ENCODE measurements at regions of chr19 and their contacts with region 1.

Region 1: DNA sequence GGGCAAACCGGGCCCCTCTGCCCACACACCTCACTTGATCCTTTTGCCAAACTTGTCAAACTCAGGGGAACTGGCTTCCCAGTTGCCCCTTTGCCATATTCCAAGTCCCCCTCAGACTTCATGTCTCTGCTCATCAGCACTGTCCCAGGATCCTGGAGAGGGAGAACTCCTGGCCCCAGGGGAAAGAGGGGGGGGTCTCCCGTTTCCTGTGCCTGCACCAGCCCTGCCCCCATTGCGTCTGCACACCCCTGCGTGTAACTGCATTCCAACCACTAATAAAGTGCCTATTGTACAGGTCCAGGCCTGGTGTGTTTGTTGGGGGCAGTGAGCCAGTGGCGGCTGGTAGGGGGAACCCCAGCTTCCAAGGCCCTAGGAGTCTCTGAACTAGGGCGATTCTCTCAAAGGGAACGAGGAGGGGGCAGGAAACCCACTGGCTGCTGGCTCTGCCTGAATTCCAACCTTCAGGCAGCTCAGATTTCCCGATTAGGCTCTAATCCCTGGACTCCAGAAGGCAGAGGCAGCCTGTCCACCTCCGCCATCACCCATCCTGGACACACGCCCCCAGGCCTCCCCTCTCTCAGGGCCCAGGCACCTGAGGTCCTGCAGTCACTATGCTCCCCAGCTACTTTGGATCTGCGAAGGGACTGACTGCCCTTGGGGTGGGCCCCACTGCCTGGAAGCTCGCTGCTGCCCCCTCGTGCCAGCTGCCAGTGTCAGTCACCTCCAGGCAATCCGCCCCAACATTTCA is 9.7 kb upstream of the ILF3 start:
- DNase-seq: peak; percentile 85 to 89
- H3K4me3 ChIP-seq: no peak overlapping the region
- H3K4me3 Mint-ChIP-seq: no peak overlapping the region
- H3K27ac Mint-ChIP-seq: peak overlapping the region; percentile 70
- H3K4me1 ChIP-seq: peaks cover 6% of the 10 kb centered on the region
- H3K4me1 Mint-ChIP-seq: peaks cover 10% of the 10 kb centered on the region
- H3K27me3 ChIP-seq: no peaks in the 10 kb centered on the region
- H3K27me3 Mint-ChIP-seq: no peaks in the 10 kb centered on the region
- CTCF ChIP-seq: peak; percentile 86 to 92

Region 2: GRCh38 chr19:10580979-10581631 is 63.3 kb before region 1 on chr19:
- CTCF ChIA-PET with region 1: interaction called, 86 read pairs
- POLR2A ChIA-PET with region 1: interaction called, 4 read pairs
- intact Hi-C with region 1: loop called (anchors 1 kb)
- DNase-seq: peak; percentile 81 to 85
- H3K4me3 ChIP-seq: no peak overlapping the region
- H3K4me3 Mint-ChIP-seq: no peak overlapping the region
- H3K27ac Mint-ChIP-seq: peak overlapping the region; percentile 57
- H3K4me1 ChIP-seq: peaks cover 6% of the 10 kb centered on the region
- H3K4me1 Mint-ChIP-seq: peaks cover 6% of the 10 kb centered on the region
- H3K27me3 ChIP-seq: no peaks in the 10 kb centered on the region
- H3K27me3 Mint-ChIP-seq: no peaks in the 10 kb centered on the region
- CTCF ChIP-seq: peak; percentile 95 to 98

Region 3: GRCh38 chr19:10602330-10603083 is 41.9 kb before region 1 on chr19:
- CTCF ChIA-PET with region 1: interaction called, 14 read pairs
- POLR2A ChIA-PET with region 1: no interaction called
- intact Hi-C with region 1: no loop called
- DNase-seq: peak; percentile 71 to 82
- H3K4me3 ChIP-seq: peak overlapping the region; percentile 72
- H3K4me3 Mint-ChIP-seq: peak overlapping the region; percentile 67
- H3K27ac Mint-ChIP-seq: no peak overlapping the region
- H3K4me1 ChIP-seq: no peaks in the 10 kb centered on the region
- H3K4me1 Mint-ChIP-seq: peaks cover 11% of the 10 kb centered on the region
- H3K27me3 ChIP-seq: no peaks in the 10 kb centered on the region
- H3K27me3 Mint-ChIP-seq: peaks cover 3% of the 10 kb centered on the region
- CTCF ChIP-seq: no peak

Region 4: GRCh38 chr19:10625003-10625776 is 19.2 kb before region 1 on chr19 and contains the start of gene SLC44A2:
- CTCF ChIA-PET with region 1: interaction called, 5 read pairs
- POLR2A ChIA-PET with region 1: interaction called, 5 read pairs
- intact Hi-C with region 1: loop called (anchors 2 kb)
- DNase-seq: peak; percentile 88 to 93
- H3K4me3 ChIP-seq: peak within 1 kb of the TSS; percentile 85
- H3K4me3 Mint-ChIP-seq: peak within 1 kb of the TSS; percentile 91
- H3K27ac Mint-ChIP-seq: peak within 1 kb of the TSS; percentile 89
- H3K4me1 ChIP-seq: peaks cover 17% of the 10 kb centered on the region
- H3K4me1 Mint-ChIP-seq: no peaks in the 10 kb centered on the region
- H3K27me3 ChIP-seq: no peaks in the 10 kb centered on the region
- H3K27me3 Mint-ChIP-seq: no peaks in the 10 kb centered on the region
- CTCF ChIP-seq: no peak
- total RNA-seq, gene SLC44A2: 119 and 120 TPM in 2 replicates

Region 5: DNA sequence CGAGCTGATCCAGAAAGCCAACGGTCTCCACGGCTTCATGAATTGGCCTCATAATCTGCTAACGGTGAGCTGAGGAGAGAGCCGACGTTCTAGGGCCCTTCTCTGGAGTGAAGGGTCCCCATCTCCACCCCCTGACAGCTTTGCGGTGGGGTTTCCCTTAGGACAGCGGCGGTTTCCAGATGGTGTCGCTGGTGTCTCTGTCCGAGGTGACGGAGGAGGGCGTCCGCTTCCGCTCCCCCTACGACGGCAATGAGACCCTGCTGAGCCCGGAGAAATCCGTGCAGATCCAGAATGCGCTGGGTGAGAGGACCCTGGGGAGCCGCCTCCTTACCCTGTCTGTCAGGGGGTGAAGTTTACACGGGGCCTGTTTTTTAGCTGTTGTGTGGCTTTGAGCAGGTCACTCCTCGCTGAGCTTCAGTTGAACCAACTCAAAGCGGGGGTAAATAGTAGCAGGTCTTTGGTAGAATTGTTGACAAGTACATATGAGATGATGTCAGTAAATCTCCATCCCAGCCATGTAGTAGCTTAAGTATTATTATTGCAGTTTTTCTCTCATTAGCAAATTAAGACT is 57.6 kb after region 1 on chr19:
- CTCF ChIA-PET with region 1: interaction called, 13 read pairs
- POLR2A ChIA-PET with region 1: no interaction called
- intact Hi-C with region 1: no loop called
- DNase-seq: no peak
- H3K4me3 ChIP-seq: peak overlapping the region; percentile 88
- H3K4me3 Mint-ChIP-seq: peak overlapping the region; percentile 93
- H3K27ac Mint-ChIP-seq: peak overlapping the region; percentile 86
- H3K4me1 ChIP-seq: peaks cover 5% of the 10 kb centered on the region; the same call in 1 of the 2 replicates
- H3K4me1 Mint-ChIP-seq: peaks cover 5% of the 10 kb centered on the region
- H3K27me3 ChIP-seq: no peaks in the 10 kb centered on the region
- H3K27me3 Mint-ChIP-seq: no peaks in the 10 kb centered on the region
- CTCF ChIP-seq: peak in 1 of 2 experiments; percentile 5